ENCODE measurements at regions of chr15 and their contacts with region 1.

Region 1: DNA sequence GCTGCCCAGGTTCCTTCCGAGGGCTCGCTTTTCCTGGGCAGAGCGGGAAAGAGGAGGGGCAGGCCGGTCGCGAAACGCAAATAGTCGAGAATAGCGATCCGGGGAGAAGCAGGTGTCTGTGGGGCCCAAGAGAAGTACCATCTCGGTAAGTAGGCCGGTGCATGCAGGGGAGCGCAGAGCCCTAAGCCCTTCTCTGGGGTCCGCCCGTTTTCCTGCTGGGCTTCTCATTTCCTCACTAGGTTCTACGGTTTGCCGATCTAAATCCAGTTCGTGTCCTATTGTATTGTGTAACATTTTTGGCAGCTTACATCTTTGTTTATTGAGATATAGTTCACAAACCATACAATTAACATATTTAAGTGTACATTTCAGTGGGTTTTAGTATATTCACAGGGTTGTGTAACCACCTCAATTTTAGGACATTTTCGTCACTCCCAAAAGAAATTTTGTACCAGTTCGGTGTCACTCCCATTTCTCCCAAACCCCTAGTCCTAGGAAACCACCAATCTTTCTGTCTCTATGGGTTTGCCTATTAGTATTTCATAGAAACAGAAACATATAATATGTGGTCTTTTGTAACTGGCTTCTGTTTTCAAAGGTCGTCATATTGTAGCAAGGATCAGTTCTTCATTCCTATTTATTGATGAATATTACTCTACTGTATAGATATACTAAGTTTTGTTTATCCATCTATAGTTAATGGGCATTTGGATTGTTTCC is 6.8 kb upstream of the TRIM69 start:
- DNase-seq: no peak
- ATAC-seq: peak; percentile 36

Region 2: GRCh38 chr15:44666210-44667038 is 63.1 kb before region 1 on chr15:
- intact Hi-C with region 1: loop called (anchors 5 kb)
- DNase-seq: no peak
- ATAC-seq: no peak